Activated CD4-positive, alpha-beta memory T cell treated with anti-CD3 and anti-CD28 coated beads for 36 hours (primary cell): ENCODE measurements at regions of chr6 and their contacts with region 1.

Region 1: DNA sequence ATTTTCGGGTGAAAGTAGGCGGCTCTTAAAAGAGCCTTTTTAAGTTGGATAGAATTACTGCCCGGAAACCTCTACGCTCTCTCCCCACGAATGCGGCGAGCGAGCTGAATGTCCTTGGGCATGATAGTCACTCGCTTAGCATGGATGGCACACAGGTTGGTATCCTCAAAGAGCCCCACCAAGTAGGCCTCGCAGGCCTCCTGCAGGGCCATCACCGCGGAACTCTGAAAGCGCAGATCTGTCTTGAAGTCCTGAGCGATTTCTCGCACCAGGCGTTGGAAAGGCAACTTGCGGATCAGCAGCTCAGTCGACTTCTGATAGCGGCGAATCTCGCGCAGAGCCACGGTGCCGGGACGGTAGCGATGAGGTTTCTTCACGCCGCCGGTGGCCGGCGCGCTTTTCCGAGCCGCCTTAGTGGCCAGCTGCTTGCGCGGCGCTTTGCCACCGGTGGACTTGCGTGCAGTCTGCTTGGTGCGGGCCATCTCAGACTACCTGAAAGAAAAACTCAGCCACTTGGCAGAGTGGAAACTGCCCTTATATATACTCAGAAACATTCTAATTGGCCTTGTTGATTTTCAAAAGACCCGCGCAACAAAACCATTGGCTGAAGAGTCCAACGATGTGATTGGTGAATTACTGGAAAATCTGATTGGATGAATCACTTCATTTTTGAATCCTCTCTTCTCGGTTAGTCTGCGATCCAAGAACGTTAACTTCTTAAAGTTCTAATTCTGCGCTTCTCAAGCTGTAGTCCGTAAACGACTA is 93.9 kb upstream of the BTN3A2 start:
- DNase-seq: peak; percentile 86
- H3K4me3 Mint-ChIP-seq: no peak overlapping the region
- H3K27ac Mint-ChIP-seq: no peak overlapping the region
- H3K4me1 Mint-ChIP-seq: peaks cover 22% of the 10 kb centered on the region
- H3K27me3 Mint-ChIP-seq: peaks cover 2% of the 10 kb centered on the region

Region 2: DNA sequence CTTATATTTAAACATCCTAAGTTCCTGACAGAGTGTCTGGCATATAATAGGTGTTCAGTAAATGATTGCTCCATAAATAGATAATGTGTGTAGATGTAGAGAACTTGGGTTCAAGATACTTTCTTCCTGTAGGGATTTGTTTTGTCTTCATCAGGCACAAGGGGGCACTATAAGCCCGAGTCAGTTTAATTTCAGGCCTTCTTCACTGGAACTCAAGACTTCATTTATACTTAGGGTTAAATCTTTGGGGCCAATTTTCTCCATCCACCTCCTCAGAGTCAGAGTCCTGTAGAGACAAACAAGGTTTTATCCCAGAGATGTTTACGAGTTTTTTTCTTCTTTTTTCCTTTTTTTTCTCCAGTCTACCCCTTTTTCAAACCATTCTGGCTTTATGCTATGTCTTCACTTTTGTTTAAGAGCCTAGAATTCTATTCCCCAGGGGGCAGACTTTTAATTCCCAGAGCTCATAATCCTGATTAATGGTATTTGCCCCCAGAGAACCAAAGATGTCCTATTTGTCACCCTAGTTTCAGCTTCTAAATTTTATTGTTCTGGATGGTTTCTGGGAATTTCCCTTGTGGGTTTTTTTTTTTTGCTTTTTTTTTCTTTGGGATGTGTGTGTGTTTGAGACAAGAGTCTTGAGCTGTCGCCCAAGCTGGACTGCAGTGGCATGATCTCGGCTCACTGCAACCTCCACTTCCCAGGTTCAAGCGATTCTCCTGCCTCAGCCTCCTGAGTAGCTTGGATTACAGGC is 95.5 kb before region 1 on chr6:
- CTCF ChIA-PET with region 1: interaction called, 3 read pairs
- POLR2A ChIA-PET with region 1: interaction called, 20 read pairs
- intact Hi-C with region 1: loop called (anchors 2 kb)
- DNase-seq: peak; percentile 63
- H3K4me3 Mint-ChIP-seq: peak overlapping the region; percentile 24
- H3K27ac Mint-ChIP-seq: peak overlapping the region; percentile 43
- H3K4me1 Mint-ChIP-seq: peaks cover 31% of the 10 kb centered on the region
- H3K27me3 Mint-ChIP-seq: no peaks in the 10 kb centered on the region

Region 3: GRCh38 chr6:26204332-26205165 is 66.5 kb before region 1 on chr6:
- CTCF ChIA-PET with region 1: interaction called, 3 read pairs
- POLR2A ChIA-PET with region 1: interaction called, 125 read pairs
- intact Hi-C with region 1: loop called (anchors 2 kb)
- DNase-seq: peak; percentile 90
- H3K4me3 Mint-ChIP-seq: no peak overlapping the region
- H3K27ac Mint-ChIP-seq: no peak overlapping the region
- H3K4me1 Mint-ChIP-seq: peaks cover 21% of the 10 kb centered on the region
- H3K27me3 Mint-ChIP-seq: peaks cover 3% of the 10 kb centered on the region

Region 4: DNA sequence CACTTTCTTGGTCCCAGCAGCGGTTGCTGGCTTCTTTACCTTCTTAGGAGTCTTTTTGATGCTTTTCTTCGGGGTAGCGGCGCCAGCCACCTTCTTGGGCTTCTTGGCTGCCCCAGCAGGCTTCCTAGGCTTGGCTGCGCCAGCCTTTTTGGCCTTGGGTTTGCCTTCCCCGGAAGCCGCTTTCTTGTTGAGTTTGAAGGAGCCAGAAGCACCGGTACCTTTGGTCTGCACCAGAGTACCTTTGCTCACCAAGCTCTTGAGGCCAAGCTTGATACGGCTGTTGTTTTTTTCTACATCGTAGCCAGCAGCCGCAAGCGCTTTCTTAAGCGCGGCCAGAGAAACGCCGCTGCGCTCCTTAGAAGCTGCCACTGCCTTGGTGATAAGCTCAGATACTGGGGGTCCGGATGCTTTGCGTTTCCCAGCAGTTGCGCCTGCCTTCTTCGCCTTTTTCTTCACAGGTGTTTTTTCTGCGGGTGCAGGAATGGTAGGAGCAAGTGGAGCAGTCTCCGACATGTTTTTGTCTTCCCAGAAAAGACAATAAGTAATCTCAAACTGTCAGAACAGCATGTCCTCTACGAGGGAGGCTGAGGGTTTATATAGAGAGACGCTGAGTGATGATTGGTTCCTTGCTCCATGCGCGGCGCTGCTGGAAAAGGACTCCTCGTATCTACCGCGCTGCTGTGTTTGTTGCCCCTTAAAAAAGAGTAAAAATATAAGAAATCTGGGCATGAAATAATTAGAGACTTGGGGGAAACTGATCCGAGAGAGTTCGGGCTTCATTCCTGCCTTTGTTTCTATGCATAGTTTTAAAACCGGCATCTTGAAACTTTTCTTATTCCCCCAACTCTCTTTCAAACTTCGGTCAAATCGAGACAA is 36.4 kb before region 1 on chr6:
- CTCF ChIA-PET with region 1: interaction called, 5 read pairs
- POLR2A ChIA-PET with region 1: interaction called, 153 read pairs
- intact Hi-C with region 1: loop called (anchors 5 kb)
- DNase-seq: peak; percentile 85
- H3K4me3 Mint-ChIP-seq: peak overlapping the region; percentile 82
- H3K27ac Mint-ChIP-seq: peak overlapping the region; percentile 99
- H3K4me1 Mint-ChIP-seq: peaks cover 29% of the 10 kb centered on the region
- H3K27me3 Mint-ChIP-seq: peaks cover 12% of the 10 kb centered on the region

Region 5: DNA sequence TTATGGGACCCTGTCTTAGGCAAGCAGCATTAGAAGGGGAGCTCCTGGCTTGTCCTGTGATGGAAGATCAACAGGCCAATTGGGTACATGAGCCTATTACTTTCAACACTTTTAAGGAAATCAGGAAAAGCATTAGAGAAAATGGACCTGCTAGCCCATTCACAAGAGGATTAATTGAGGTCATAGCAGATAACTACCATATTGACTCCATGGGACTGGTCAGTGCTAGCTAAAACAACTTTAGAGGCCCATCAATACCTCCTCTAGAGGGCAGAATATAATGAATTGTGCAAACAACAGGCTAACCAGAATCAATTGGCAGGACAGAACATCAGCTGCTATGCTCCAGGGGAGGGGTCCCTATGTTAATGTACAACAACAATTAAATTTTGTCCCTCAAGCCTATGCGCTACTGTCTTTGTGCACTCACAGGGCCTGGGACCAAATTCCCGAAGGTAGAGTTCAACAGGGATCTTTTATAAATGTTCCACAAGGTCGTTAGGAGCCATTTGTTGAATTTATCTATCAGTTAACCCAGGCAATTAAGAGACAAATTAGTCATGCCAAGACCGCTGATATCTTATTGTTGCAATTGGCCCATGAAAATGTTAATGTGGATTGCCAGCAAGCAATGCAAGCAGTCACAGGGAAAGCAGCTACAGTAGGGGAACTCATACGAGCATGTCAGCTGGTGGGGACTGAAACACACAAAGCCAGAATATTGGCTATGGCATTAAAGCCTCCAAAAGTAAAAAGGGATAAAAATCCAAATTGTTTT is 12.7 kb before region 1 on chr6:
- CTCF ChIA-PET with region 1: interaction called, 3 read pairs
- POLR2A ChIA-PET with region 1: interaction called, 27 read pairs
- intact Hi-C with region 1: no loop called
- DNase-seq: no peak
- H3K4me3 Mint-ChIP-seq: no peak overlapping the region
- H3K27ac Mint-ChIP-seq: no peak overlapping the region
- H3K4me1 Mint-ChIP-seq: peaks cover 3% of the 10 kb centered on the region
- H3K27me3 Mint-ChIP-seq: no peaks in the 10 kb centered on the region

Region 6: GRCh38 chr6:26375270-26375669 is 104.2 kb after region 1 on chr6:
- CTCF ChIA-PET with region 1: no interaction called
- POLR2A ChIA-PET with region 1: no interaction called
- intact Hi-C with region 1: no loop called
- DNase-seq: no peak
- H3K4me3 Mint-ChIP-seq: no peak overlapping the region
- H3K27ac Mint-ChIP-seq: peak overlapping the region; percentile 46
- H3K4me1 Mint-ChIP-seq: peaks cover 21% of the 10 kb centered on the region
- H3K27me3 Mint-ChIP-seq: no peaks in the 10 kb centered on the region

Region 7: GRCh38 chr6:26389349-26389894 is 118.3 kb after region 1 on chr6:
- CTCF ChIA-PET with region 1: no interaction called
- POLR2A ChIA-PET with region 1: no interaction called
- intact Hi-C with region 1: no loop called
- DNase-seq: no peak
- H3K4me3 Mint-ChIP-seq: no peak overlapping the region
- H3K27ac Mint-ChIP-seq: peak overlapping the region; percentile 5
- H3K4me1 Mint-ChIP-seq: peaks cover 16% of the 10 kb centered on the region
- H3K27me3 Mint-ChIP-seq: no peaks in the 10 kb centered on the region

Region 8: GRCh38 chr6:27146706-27147505 is 875.8 kb after region 1 on chr6:
- CTCF ChIA-PET with region 1: no interaction called
- POLR2A ChIA-PET with region 1: interaction called, 12 read pairs
- intact Hi-C with region 1: loop called (anchors 5 kb)
- DNase-seq: peak; percentile 89
- H3K4me3 Mint-ChIP-seq: no peak overlapping the region
- H3K27ac Mint-ChIP-seq: no peak overlapping the region
- H3K4me1 Mint-ChIP-seq: peaks cover 21% of the 10 kb centered on the region
- H3K27me3 Mint-ChIP-seq: no peaks in the 10 kb centered on the region